OCI-LY7 (cell line): ENCODE measurements at regions of chr15 and their contacts with region 1.

Region 1: DNA sequence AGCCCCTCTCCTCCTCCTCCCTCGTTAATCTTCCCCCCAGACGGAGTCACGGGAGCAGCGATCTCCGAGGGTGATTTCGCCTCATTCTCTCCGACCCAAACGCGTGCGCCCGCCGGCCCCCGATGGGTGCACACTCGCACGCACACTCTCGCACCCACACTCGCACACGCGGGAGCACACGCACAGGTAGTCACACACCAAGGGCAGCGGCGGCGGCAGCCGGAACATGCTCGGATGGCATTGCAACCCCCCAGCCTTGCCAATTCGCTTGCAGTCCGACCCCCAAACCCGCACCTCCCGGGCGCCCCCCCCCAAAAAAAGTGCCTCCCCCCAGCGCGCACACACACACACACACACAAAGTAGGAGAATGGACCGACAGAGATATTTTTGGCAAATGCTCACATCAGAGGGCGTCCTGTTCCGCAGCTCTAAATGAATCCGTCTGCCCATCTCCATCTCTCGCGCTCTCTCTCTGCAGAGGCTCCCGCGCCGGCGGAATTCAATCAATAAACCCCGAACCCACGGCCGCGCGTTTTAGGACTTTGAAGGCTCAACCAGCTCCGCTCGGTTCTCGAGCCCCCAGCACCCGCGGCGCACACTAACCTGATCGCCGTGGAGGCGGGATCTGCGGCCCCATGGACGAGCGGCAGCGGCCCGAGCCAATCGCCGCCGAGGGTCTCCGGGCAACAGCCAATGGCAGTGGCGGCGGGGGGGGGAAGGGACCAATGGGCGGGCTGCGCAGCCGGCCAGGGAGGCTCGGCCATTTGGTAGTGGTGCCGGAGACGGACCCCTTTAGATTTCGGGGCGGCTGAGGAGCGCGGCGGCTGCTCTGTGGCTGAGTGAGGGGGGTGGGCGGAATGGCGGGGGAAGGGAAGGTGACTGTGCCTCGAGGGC is at the start of gene ANP32A:
- DNase-seq: peak; percentile 98
- H3K4me3 ChIP-seq: peak within 1 kb of the TSS; percentile 95
- H3K27ac ChIP-seq: peak within 1 kb of the TSS; percentile 91
- H3K4me1 ChIP-seq: peaks cover 30% of the 10 kb centered on the region
- CTCF ChIP-seq: no peak
- total RNA-seq, gene ANP32A: 232 and 282 TPM in 2 replicates

Region 2: GRCh38 chr15:68631601-68632051 is 188.9 kb before region 1 on chr15:
- CTCF ChIA-PET with region 1: no interaction called
- POLR2A ChIA-PET with region 1: interaction called, 5 read pairs
- intact Hi-C with region 1: loop called (anchors 5 kb)
- DNase-seq: peak; percentile 100
- H3K4me3 ChIP-seq: peak overlapping the region; percentile 54
- H3K27ac ChIP-seq: peak overlapping the region; percentile 97
- H3K4me1 ChIP-seq: peaks cover 97% of the 10 kb centered on the region
- CTCF ChIP-seq: peak; percentile 90

Region 3: DNA sequence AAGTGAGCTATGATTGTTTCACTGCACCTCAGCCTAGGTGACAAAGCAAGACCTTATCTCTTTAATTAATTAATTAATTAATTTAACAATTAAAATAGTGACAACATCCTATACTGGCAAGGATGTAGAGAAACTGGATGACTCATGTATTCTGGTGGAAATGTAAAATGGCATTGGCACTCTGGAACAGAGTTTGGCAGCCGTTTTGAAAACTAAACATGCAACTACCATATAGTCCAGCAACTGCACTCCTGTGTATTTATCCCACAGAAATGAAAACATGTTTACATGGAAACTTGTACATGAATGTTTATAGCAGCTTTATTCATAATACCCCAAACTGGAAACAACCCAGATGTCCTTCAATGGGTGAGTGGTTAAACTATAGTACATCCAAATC is 56.5 kb before region 1 on chr15:
- CTCF ChIA-PET with region 1: no interaction called
- POLR2A ChIA-PET with region 1: no interaction called
- intact Hi-C with region 1: no loop called
- DNase-seq: no peak
- H3K4me3 ChIP-seq: no peak overlapping the region
- H3K27ac ChIP-seq: no peak overlapping the region
- H3K4me1 ChIP-seq: no peaks in the 10 kb centered on the region
- CTCF ChIP-seq: no peak

Region 4: GRCh38 chr15:68801572-68802148 is 18.9 kb before region 1 on chr15:
- CTCF ChIA-PET with region 1: no interaction called
- POLR2A ChIA-PET with region 1: interaction called, 11 read pairs
- intact Hi-C with region 1: no loop called
- DNase-seq: no peak
- H3K4me3 ChIP-seq: no peak overlapping the region
- H3K27ac ChIP-seq: peak overlapping the region; percentile 37
- H3K4me1 ChIP-seq: peaks cover 60% of the 10 kb centered on the region
- CTCF ChIP-seq: no peak

Region 5: GRCh38 chr15:68843425-68844311 is 23.1 kb after region 1 on chr15:
- CTCF ChIA-PET with region 1: interaction called, 8 read pairs
- POLR2A ChIA-PET with region 1: interaction called, 96 read pairs
- intact Hi-C with region 1: loop called (anchors 1 kb)
- DNase-seq: peak; percentile 85
- H3K4me3 ChIP-seq: peak overlapping the region; percentile 64
- H3K27ac ChIP-seq: peak overlapping the region; percentile 99
- H3K4me1 ChIP-seq: peaks cover 75% of the 10 kb centered on the region
- CTCF ChIP-seq: no peak

Region 6: GRCh38 chr15:69452692-69453521 is 632.4 kb after region 1 on chr15 and contains the start of gene RPLP1:
- CTCF ChIA-PET with region 1: no interaction called
- POLR2A ChIA-PET with region 1: no interaction called
- intact Hi-C with region 1: loop called (anchors 10 kb)
- DNase-seq: peak; percentile 98
- H3K4me3 ChIP-seq: peak within 1 kb of the TSS; percentile 94
- H3K27ac ChIP-seq: peak within 1 kb of the TSS; percentile 92
- H3K4me1 ChIP-seq: peaks cover 27% of the 10 kb centered on the region
- CTCF ChIP-seq: no peak
- total RNA-seq, gene RPLP1: 469 and 889 TPM in 2 replicates